K562 (cell line): ENCODE measurements at regions of chr17 and their contacts with region 1.

Region 1: GRCh38 chr17:11997147-11997846 is at the start of gene ZNF18:
- DNase-seq: peak; percentile 92 to 95 (median 95)
- ATAC-seq: peak; percentile 99
- H3K4me3 ChIP-seq: peak within 1 kb of the TSS; percentile 91
- H3K27ac ChIP-seq: peak within 1 kb of the TSS; percentile 79
- H3K4me1 ChIP-seq: peaks cover 0 to 4% of the 10 kb centered on the region in 2 experiments; a peak in 2 of 5 replicates
- H3K27me3 ChIP-seq: no peaks in the 10 kb centered on the region
- CTCF ChIP-seq: no peak
- EP300 ChIP-seq: no peak
- POLR2A ChIP-seq: peak; percentile 97
- RAD21 ChIP-seq: no peak
- polyA plus RNA-seq, gene ZNF18: 1.1 to 3.4 TPM

Region 2: GRCh38 chr17:12007466-12007865 is 10.2 kb after region 1 on chr17:
- CTCF ChIA-PET with region 1: interaction called, 3 read pairs
- POLR2A ChIA-PET with region 1: interaction called, 10 read pairs
- in situ Hi-C with region 1: no loop called
- intact Hi-C with region 1: no loop called
- DNase-seq: no peak
- ATAC-seq: no peak
- H3K4me3 ChIP-seq: no peak overlapping the region
- H3K27ac ChIP-seq: no peak overlapping the region
- H3K4me1 ChIP-seq: no peaks in the 10 kb centered on the region; a peak in 1 of 5 replicates
- H3K27me3 ChIP-seq: no peaks in the 10 kb centered on the region
- CTCF ChIP-seq: no peak
- EP300 ChIP-seq: no peak
- POLR2A ChIP-seq: no peak
- RAD21 ChIP-seq: no peak